ENCODE measurements at regions of chr12 and their contacts with region 1.

Region 1: GRCh38 chr12:118372541-118373495 is at the start of gene TAOK3:
- DNase-seq: peak; percentile 99
- H3K4me3 ChIP-seq: peak within 1 kb of the TSS; percentile 89
- CTCF ChIP-seq: no peak

Region 2: DNA sequence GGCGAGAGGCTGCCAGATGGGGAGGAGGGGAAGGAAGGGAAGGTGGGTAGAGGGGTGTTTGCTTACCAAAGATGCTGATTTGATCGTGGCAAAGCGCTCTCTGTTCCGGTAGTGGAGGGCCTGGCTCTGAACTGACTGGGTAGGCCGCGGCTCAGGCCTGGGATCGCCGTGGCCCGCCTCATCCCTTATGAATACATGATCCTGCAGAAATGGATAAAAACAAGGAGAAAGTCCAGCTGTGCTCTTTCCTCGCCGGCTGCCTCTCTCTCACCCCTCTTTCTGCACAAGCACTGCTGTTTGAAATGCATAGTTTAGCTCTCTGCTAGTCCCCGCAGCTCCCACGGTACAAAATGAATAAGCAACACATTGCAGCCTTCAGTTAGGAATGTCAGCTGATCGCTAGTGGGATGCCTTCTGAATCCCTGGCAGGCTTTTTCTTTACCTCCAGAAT is 183.1 kb before region 1 on chr12:
- in situ Hi-C with region 1: loop called (anchors 10 kb)
- DNase-seq: peak; percentile 66
- H3K4me3 ChIP-seq: peak overlapping the region; percentile 46
- CTCF ChIP-seq: no peak

Region 3: DNA sequence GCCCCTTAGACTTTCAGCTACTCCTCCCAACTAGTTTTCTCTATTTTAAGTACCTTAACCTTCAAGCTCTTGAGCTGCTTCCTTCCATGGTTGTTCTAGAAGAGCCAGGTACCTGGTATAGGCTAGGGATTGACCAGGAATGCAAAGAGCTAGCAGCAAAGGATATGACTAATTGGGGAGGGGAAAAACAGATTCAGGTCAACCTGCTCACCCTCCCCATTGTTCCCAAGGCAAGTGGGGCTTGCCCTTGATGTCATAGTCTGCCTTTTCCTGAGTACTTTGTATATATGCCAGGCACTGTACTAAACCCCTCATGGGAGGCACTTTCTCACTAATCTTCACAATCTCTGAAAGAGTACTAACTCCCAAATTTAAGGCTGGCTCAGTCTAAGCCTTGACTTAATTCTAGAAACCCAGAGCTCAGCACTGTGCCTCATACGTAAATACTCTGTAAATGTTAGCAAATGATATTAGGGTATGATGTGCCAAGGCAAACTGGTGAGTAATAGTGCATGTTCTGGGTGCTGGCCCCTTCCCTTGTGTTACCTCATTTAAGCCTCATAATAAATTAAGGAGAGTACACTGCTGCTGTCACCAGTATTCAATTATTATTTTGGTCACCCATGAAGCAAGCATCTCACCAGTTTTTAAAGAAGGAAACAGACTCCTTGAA is 45.7 kb after region 1 on chr12:
- in situ Hi-C with region 1: no loop called
- DNase-seq: peak; percentile 15
- H3K4me3 ChIP-seq: no peak overlapping the region
- CTCF ChIP-seq: no peak